ENCODE measurements at regions of chr7 and their contacts with region 1.

Region 1: DNA sequence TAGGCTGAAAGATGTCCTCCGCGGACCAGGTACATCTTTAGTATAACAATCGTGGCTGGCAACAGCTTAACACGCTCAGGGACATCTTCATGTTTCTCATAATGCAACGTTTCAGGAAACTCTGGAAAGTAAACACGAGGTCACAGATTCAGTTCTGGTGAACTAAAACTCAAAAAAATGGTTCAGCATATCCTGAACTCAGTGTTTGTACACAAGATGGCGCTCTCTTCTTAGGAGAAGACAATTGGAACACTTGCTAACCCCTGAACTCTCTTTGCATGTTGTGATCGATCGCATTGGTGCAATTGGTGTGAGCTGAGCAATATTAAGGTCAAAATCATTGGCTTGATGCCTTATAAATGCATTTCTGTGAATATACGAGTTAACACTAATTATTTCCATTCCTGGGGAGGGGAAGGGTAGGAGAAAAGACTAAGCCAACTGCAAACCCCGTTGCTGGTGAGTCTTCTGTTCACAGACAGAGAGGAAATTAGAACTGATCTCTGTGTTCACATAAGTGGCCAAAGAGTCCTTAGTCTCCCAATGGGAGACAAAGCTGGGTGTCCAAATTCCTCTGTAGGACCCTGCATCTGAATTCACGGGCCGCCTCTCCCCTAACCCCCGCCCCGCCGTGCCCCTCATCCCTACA is 52.6 kb upstream of the FAM180A start:
- DNase-seq: no peak
- ATAC-seq: peak; percentile 76
- H3K4me3 ChIP-seq: peak overlapping the region; percentile 24 to 56
- H3K27ac ChIP-seq: peak overlapping the region in 1 of 2 donors; percentile 86
- H3K4me1 ChIP-seq: no peaks in the 10 kb centered on the region
- H3K27me3 ChIP-seq: no peaks in the 10 kb centered on the region

Region 2: DNA sequence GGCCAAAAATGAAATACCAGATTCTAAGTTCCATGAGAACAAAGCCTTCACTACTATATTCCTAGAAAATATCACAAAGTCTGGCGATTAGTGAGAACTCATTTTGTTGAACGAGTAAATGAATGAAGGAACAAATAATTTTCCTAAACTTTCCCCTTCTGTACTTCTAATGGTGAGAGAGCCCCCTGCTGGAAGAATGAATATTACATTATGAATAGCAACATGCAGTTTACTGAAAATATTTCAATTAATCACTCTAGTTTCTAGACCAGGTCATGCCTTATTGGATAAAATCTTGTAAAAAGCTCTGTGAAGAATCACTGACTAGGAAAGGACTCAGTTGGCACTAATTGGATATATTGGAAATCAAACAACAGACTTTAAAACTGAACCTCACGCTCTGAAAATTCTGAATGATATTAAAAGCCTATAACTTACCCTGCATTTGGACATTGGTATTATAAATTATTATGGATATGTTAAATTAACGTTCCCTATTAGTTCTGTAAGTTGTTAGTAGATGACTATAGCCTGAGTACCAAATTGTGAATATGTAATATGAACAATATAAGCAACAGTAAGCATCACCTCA is 208.4 kb after region 1 on chr7:
- intact Hi-C with region 1: loop called (anchors 2 kb)
- DNase-seq: no peak
- ATAC-seq: peak; percentile 68
- H3K4me3 ChIP-seq: no peak overlapping the region
- H3K27ac ChIP-seq: no peak overlapping the region
- H3K4me1 ChIP-seq: no peaks in the 10 kb centered on the region
- H3K27me3 ChIP-seq: no peaks in the 10 kb centered on the region